Esophagus squamous epithelium (tissue), 5 donors: ENCODE measurements at regions of chr2 and their contacts with region 1.

Region 1: DNA sequence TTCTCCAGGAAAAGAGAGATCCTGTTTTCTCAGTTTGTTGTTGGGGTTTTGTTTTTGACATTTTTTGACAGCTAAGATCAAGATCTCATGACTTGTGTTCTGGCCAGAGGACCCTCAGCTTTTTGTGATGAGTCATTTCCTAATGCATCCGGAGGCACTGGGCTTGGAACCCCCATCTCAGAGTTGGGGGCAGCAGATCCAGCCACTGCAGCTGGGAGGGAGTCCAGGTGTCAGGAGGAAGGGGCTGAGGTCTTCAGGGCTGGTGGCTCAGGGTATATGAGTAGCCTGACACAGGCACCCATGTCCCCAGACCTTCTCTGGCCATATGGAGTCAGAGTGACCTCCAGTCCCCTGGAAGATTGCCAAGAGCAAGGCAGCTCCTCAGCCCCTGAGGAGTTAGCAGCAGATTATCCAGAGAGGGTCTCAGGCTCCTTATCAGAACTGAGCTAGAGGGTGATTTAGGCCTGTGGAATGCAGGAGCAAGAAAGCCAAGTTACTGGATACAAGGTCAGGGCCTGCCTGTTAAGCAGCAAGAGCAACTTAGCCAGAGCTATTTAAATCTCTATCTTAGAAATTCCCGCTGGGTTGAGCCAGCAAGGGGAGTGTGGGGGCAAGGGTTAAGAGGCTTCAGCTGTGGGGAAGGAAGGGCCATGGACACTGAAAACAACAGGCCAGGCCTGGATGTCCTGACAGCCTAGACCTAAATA is 62.4 kb downstream of the TANC1 start:
- DNase-seq: no peak
- H3K4me3 ChIP-seq: no peak overlapping the region
- H3K27ac ChIP-seq: peak overlapping the region; percentile 38 to 85 (median 70)
- H3K4me1 ChIP-seq: peaks cover 9 to 63% (median 30%) of the 10 kb centered on the region in 3 donors
- H3K27me3 ChIP-seq: no peaks in the 10 kb centered on the region
- CTCF ChIP-seq: no peak
- POLR2A ChIP-seq: no peak

Region 2: DNA sequence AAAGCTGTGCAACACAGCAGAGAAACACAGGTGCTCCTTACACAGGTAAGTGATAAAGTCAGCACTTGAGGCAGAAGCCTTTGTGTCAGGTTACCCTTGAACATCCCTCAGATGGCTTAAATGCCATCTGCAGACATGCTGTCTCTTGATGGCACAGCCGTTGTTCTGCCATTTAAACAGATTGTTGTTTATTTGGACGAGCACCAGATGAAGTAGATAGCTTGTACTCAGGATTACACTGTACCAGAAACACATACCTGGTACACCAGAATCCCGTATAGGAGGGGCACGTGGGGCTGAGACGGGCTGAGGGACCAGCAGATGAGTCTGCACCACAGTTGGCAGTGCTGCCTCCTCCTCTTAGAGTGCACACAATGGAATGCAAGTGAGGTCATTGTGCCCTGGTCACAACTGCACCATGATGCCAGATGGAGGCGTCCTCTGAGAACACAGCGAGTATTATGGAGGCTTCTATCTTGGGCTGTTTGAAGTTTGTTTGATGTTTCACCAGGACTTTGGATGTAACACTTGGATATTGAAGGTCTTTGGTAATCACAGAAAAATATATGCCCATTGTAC is 80.6 kb after region 1 on chr2:
- intact Hi-C with region 1: loop called (anchors 5 kb)
- DNase-seq: no peak
- H3K4me3 ChIP-seq: no peak overlapping the region
- H3K27ac ChIP-seq: peak overlapping the region in 2 of 4 donors; percentile 41 to 48
- H3K4me1 ChIP-seq: peaks cover 0 to 50% (median 14%) of the 10 kb centered on the region in 3 donors
- H3K27me3 ChIP-seq: no peaks in the 10 kb centered on the region
- CTCF ChIP-seq: no peak
- POLR2A ChIP-seq: no peak

Region 3: GRCh38 chr2:159476329-159476728 is 445.5 kb after region 1 on chr2:
- intact Hi-C with region 1: no loop called
- DNase-seq: no peak
- H3K4me3 ChIP-seq: no peak overlapping the region
- H3K27ac ChIP-seq: no peak overlapping the region
- H3K4me1 ChIP-seq: no peaks in the 10 kb centered on the region
- H3K27me3 ChIP-seq: no peaks in the 10 kb centered on the region
- CTCF ChIP-seq: no peak
- POLR2A ChIP-seq: no peak